Prostate gland (tissue), 2 donors: ENCODE measurements at regions of chr19 and their contacts with region 1.

Region 1: DNA sequence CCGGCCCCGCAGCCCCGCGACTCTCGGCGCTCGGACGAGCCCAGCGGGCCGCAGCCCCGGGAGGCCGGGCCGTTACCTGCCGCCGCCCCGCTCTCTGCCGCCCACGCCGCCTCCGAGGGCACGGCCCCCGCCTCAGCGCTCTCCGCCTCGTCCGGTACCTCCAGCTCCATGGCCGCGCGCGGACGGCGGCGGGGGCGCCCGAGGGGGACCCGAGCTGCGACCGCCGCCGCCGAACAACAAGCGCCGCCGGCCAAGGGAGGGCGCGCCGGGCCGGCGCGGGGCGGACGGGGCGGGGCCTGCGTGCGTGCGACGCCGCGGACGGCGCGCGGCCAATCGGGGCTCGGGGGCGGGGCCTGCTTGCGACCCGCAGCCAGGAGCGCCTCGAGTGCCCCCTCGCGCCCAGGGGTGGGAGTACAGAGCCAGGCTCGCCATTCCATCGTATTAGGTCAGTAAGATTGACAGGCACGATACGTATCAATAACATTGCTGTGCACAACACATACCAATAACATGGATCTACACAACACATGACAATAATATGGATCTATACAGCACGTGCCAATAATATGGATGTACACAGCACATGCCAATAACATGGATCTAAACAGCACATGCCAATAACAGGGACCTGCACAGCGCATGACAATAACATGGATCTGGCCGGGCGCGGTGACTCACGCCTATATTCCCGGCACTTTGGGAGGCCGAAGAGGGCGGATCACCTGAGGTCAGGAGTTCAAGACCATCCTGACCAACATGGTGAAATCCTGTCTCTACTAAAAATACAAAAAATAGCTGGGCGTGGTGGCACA is at the start of gene PIP5K1C:
- DNase-seq: peak; percentile 84
- H3K4me3 ChIP-seq: peak within 1 kb of the TSS; percentile 93 to 96
- H3K27ac ChIP-seq: peak within 1 kb of the TSS; percentile 86
- H3K4me1 ChIP-seq: no peaks in the 10 kb centered on the region
- H3K27me3 ChIP-seq: no peaks in the 10 kb centered on the region
- CTCF ChIP-seq: peak; percentile 77 to 97 (median 88)
- POLR2A ChIP-seq: peak; percentile 29
- total RNA-seq, gene PIP5K1C: 34.3 to 75.5 TPM

Region 2: GRCh38 chr19:3665681-3666544 is 34.5 kb before region 1 on chr19:
- intact Hi-C with region 1: loop called (anchors 1 kb)
- DNase-seq: peak; percentile 46
- H3K4me3 ChIP-seq: no peak overlapping the region
- H3K27ac ChIP-seq: peak overlapping the region in 1 of 2 donors; percentile 35
- H3K4me1 ChIP-seq: no peaks in the 10 kb centered on the region
- H3K27me3 ChIP-seq: no peaks in the 10 kb centered on the region
- CTCF ChIP-seq: peak; percentile 94 to 97 (median 96)
- POLR2A ChIP-seq: no peak

Region 3: DNA sequence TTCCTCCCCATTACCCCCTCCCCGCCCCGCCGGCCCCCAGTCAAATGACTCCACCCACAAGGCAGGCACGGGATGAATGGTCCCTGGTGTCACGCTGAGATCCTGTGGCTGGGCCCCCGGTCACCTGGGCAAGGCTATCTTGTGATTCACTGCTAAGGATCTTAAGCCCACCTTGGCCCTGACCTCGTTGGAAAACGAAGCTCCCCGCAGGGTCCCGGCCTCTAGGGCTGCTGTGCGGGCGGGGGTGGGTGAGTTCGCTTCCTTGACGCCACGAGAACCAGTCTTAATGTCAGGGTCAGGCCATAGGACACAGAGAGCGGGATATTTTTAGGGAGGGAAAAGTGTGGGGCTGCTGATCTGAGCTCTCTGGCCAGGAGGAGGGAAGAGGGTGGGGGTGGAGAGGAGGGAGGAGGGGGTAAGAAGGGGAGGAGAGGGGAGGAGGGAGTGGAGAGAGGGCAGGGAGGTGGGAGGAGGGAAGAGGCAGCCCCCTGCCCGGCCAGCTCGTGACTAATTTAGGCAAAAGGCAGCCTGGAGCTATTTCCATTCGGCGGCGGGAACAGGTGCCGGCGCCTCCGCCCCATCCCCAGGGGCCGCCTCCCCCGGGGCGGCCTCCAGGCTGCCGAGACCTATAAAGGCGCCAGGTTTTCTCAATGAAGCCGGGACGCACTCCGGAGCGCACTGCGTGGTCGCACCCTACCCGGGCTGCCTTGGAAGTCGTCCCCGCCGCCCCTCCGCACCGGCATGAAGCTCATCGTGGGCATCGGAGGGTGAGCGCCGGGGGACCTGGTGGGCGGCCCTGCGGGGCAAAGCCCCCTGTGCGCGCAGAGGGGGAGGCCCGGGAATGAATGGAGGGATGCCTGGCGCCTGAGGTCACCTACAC is 232.7 kb after region 1 on chr19 and contains the start of gene NMRK2:
- intact Hi-C with region 1: no loop called
- DNase-seq: no peak
- H3K4me3 ChIP-seq: no peak within 1 kb of the TSS
- H3K27ac ChIP-seq: no peak within 1 kb of the TSS
- H3K4me1 ChIP-seq: no peaks in the 10 kb centered on the region
- H3K27me3 ChIP-seq: peaks cover 4% of the 10 kb centered on the region
- CTCF ChIP-seq: no peak
- POLR2A ChIP-seq: no peak
- total RNA-seq, gene NMRK2: 0.64 to 1.8 TPM